ENCODE measurements at regions of chr5 and their contacts with region 1.

Region 1: GRCh38 chr5:64180661-64181343 is 15.2 kb downstream of the RNF180 start:
- DNase-seq: no peak
- ATAC-seq: no peak
- H3K4me3 ChIP-seq: no peak overlapping the region
- H3K27ac ChIP-seq: no peak overlapping the region
- H3K4me1 ChIP-seq: no peaks in the 10 kb centered on the region
- H3K27me3 ChIP-seq: no peaks in the 10 kb centered on the region
- CTCF ChIP-seq: no peak

Region 2: DNA sequence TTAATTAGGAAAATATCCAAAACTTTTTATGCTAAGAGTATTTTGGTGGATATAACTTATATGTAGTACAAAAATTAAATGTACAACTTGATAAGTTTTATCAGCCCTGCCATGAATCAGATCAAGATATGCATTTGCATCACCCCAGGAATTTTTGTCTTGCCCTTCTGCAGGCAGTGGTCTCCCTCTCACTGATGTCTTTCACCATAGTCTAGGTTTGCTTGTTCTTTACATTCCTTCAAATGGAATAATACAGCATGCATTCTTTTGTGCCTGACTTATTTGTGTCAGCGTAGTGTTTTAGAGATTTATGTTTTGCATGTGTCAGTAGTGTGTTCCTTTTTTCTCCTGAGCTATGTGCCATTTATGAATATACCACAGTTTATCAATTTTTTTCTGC is 21.2 kb after region 1 on chr5:
- CTCF ChIA-PET with region 1: no interaction called
- POLR2A ChIA-PET with region 1: no interaction called
- intact Hi-C with region 1: loop called (anchors 2 kb)
- DNase-seq: no peak
- ATAC-seq: no peak
- H3K4me3 ChIP-seq: no peak overlapping the region
- H3K27ac ChIP-seq: no peak overlapping the region
- H3K4me1 ChIP-seq: no peaks in the 10 kb centered on the region
- H3K27me3 ChIP-seq: no peaks in the 10 kb centered on the region
- CTCF ChIP-seq: no peak

Region 3: DNA sequence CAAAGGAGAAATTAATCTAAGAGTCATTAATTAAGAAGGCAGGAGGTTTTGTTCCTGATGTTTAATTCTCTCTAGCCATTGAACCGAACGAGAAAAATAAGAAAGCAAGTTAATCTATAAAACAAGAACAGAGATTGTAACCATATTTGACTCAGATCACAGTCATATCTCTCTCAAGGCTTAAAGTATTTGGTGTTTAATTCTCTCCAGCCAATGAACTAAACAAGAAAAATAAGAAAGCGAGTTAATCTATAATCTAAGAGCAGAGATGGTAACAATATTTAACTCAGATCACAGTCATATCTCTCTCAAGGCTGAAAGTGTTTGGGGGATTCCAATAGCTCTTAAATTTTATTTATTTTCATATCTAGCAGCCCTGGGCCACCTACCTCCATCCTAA is 435.1 kb after region 1 on chr5:
- CTCF ChIA-PET with region 1: no interaction called
- POLR2A ChIA-PET with region 1: no interaction called
- intact Hi-C with region 1: no loop called
- DNase-seq: no peak
- ATAC-seq: no peak
- H3K4me3 ChIP-seq: no peak overlapping the region
- H3K27ac ChIP-seq: no peak overlapping the region
- H3K4me1 ChIP-seq: no peaks in the 10 kb centered on the region
- H3K27me3 ChIP-seq: no peaks in the 10 kb centered on the region
- CTCF ChIP-seq: no peak